ENCODE measurements at regions of chr12 and their contacts with region 1.

Region 1: GRCh38 chr12:53431187-53431586 is 7.5 kb downstream of the AMHR2 start:
- DNase-seq: no peak
- H3K4me3 ChIP-seq: no peak overlapping the region
- H3K27ac ChIP-seq: no peak overlapping the region
- H3K4me1 ChIP-seq: no peaks in the 10 kb centered on the region
- H3K27me3 ChIP-seq: no peaks in the 10 kb centered on the region
- CTCF ChIP-seq: no peak

Region 2: DNA sequence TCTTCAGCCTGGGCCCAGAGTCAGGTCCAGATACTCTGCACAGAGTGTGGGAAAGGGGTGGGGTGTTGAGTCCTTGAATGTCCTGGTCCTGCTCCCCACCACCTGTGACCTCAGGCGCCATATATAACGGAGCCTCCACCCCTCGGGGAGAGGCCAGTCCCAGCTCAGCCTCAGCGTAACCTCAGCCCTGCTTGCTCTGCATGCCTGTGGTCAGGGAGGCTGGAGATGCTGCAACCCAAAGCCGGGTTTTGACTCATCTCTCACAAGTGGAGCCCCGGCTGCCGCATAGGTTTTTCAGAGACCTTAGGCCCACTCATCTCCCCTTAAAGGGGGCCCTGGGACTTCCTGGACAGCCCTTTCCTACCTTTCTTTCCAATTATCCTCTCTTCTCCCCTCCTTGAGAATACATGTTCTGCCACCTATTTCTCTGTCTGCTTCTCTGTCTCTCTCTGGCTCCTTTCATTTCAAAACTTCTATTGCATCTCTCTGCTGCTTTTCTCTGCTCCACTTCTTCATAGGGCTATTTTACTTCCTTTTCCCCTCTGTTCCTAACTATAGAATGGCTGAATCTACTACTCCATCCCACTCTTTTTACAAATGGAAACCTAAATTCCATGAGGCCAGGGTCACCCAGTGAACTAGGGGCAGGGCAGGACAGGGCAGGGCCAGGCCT is 225.3 kb before region 1 on chr12:
- CTCF ChIA-PET with region 1: no interaction called
- POLR2A ChIA-PET with region 1: interaction called, 10 read pairs
- intact Hi-C with region 1: no loop called
- DNase-seq: no peak
- H3K4me3 ChIP-seq: no peak overlapping the region
- H3K27ac ChIP-seq: no peak overlapping the region
- H3K4me1 ChIP-seq: no peaks in the 10 kb centered on the region
- H3K27me3 ChIP-seq: no peaks in the 10 kb centered on the region
- CTCF ChIP-seq: no peak

Measured in A673 (cell line).